Ovary (tissue), 10 donors: ENCODE measurements at regions of chr5 and their contacts with region 1.

Region 1: DNA sequence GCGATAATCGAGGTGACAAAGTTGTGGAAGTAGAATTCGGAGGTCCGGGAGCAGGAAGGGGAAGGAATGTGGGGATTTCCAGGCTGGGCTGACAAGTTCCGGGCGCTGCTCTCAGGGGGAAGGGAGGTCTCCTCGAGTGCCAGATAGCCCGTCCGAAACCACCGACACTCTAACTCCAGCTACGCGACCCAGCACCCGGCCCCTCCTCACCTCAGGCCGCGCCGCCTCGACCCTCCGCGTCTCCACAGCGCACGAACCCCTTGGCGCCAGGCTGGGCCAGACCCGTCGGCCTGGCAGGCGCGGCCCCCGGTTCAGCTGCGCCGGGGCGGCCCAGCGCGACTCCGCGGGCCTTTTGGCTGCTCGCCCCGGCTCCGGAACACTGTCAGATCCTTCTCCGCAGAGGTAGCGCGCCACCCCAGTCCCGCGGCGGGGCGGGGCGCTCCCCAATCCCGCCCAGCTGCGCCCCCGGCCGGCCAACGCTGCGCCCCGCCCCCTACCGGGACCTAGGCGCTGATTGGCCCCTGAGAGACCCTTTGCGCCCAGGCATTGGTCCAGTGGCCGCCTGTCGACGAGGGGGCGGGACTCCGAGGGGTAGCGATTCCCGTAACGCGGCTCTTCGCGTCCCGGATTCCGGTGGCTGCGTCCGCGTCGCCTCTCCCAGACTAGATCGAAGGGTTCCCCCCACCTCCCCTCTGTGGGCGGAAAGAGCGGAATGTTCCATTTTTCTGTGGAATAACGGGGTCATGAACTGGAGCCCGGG is at the start of gene IL6ST:
- DNase-seq: peak; percentile 98 to 99 (median 98)
- H3K4me3 ChIP-seq: peak within 1 kb of the TSS; percentile 77
- H3K27ac ChIP-seq: peak within 1 kb of the TSS; percentile 96 to 98
- H3K4me1 ChIP-seq: peaks cover 3% of the 10 kb centered on the region
- H3K27me3 ChIP-seq: no peaks in the 10 kb centered on the region
- CTCF ChIP-seq: peak in 2 of 3 donors; percentile 34 to 40
- EP300 ChIP-seq: peak; percentile 86
- POLR2A ChIP-seq: peak; percentile 91
- total RNA-seq, gene IL6ST: 142 to 406 (median 186) TPM

Region 2: GRCh38 chr5:56012281-56012963 is 17.7 kb after region 1 on chr5:
- intact Hi-C with region 1: no loop called
- DNase-seq: peak in 1 of 5 donors; percentile 18
- H3K4me3 ChIP-seq: no peak overlapping the region
- H3K27ac ChIP-seq: no peak overlapping the region
- H3K4me1 ChIP-seq: peaks cover 3% of the 10 kb centered on the region
- H3K27me3 ChIP-seq: no peaks in the 10 kb centered on the region
- CTCF ChIP-seq: no peak
- EP300 ChIP-seq: no peak
- POLR2A ChIP-seq: no peak

Region 3: GRCh38 chr5:56070851-56071465 is 76.2 kb after region 1 on chr5:
- intact Hi-C with region 1: loop called in 1 of 4 experiments (anchors 10 kb)
- DNase-seq: no peak
- H3K4me3 ChIP-seq: no peak overlapping the region
- H3K27ac ChIP-seq: peak overlapping the region in 1 of 2 donors; percentile 55
- H3K4me1 ChIP-seq: peaks cover 11% of the 10 kb centered on the region
- H3K27me3 ChIP-seq: no peaks in the 10 kb centered on the region
- CTCF ChIP-seq: no peak
- EP300 ChIP-seq: no peak
- POLR2A ChIP-seq: no peak

Region 4: GRCh38 chr5:56123531-56124243 is 128.9 kb after region 1 on chr5:
- intact Hi-C with region 1: loop called in 1 of 4 experiments (anchors 10 kb)
- DNase-seq: peak; percentile 67 to 83 (median 74)
- H3K4me3 ChIP-seq: no peak overlapping the region
- H3K27ac ChIP-seq: peak overlapping the region in 1 of 2 donors; percentile 76
- H3K4me1 ChIP-seq: peaks cover 14% of the 10 kb centered on the region
- H3K27me3 ChIP-seq: no peaks in the 10 kb centered on the region
- CTCF ChIP-seq: no peak
- EP300 ChIP-seq: no peak
- POLR2A ChIP-seq: no peak